CD4-positive, alpha-beta T cell (primary cell): ENCODE measurements at regions of chr9 and their contacts with region 1.

Region 1: DNA sequence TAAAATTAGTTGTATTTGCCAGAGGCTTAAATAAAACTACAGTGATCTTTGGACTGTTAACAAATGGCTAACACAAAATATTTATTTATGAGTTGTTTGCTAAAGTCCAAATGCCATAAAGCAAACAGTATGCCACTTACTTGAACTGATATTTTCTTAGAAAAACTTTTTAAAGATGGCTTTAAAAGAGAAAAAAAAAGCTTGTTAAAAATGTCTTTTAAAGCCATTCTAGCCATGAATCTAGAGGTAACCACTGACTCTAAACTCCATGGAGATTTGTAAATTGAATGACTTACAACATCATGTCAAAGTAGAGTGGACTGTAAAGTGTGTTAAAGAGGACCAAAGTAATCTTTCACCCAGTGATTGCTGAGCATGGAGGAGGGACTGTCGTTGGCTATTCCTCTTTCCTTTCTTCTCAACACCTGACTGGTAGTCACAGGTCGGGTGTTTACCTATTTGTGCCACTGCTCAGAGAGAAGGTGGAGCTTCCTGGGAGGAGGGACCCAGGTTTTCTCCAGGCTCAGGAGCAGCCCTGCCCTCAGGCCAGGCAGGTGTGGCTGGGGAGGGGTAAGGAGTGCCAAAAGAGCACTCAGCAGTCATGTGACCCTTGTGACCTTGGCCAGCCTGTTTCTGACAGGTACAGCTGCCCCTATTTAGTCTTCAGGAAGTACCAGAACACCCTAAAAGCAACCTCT is 69.1 kb upstream of the TJP2 start:
- DNase-seq: no peak
- ATAC-seq: no peak
- H3K4me3 ChIP-seq: no peak overlapping the region
- H3K4me3 Mint-ChIP-seq: no peak overlapping the region
- H3K27ac ChIP-seq: no peak overlapping the region
- H3K27ac Mint-ChIP-seq: no peak overlapping the region
- H3K4me1 ChIP-seq: no peaks in the 10 kb centered on the region
- H3K4me1 Mint-ChIP-seq: no peaks in the 10 kb centered on the region
- H3K27me3 ChIP-seq: no peaks in the 10 kb centered on the region
- H3K27me3 Mint-ChIP-seq: no peaks in the 10 kb centered on the region
- CTCF ChIP-seq: no peak

Region 2: DNA sequence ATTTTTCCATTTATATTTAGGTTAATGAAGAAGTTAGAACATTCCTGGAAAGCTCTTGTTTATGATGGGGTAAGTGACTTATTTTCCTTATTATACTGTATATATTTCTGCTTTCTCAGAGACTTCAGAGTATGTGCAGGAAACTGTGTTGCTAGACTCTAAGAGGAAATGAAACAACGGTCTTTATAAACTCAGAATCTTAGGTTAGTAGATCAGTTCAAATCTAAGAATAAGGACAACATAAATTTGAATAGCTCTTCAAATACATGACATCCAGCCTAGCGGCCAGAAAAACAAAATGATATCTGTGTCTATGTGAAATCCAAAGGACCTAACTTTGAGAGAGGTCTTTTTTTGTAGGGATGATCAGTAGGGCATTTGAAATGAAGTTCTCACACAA is 185.3 kb before region 1 on chr9:
- CTCF ChIA-PET with region 1: no interaction called
- POLR2A ChIA-PET with region 1: no interaction called
- intact Hi-C with region 1: no loop called
- DNase-seq: no peak
- ATAC-seq: no peak
- H3K4me3 ChIP-seq: no peak overlapping the region
- H3K4me3 Mint-ChIP-seq: no peak overlapping the region
- H3K27ac ChIP-seq: no peak overlapping the region
- H3K27ac Mint-ChIP-seq: no peak overlapping the region
- H3K4me1 ChIP-seq: no peaks in the 10 kb centered on the region
- H3K4me1 Mint-ChIP-seq: peaks cover 7% of the 10 kb centered on the region
- H3K27me3 ChIP-seq: no peaks in the 10 kb centered on the region
- H3K27me3 Mint-ChIP-seq: no peaks in the 10 kb centered on the region
- CTCF ChIP-seq: no peak

Region 3: GRCh38 chr9:69143291-69143690 is 38.3 kb after region 1 on chr9:
- CTCF ChIA-PET with region 1: no interaction called
- POLR2A ChIA-PET with region 1: no interaction called
- intact Hi-C with region 1: loop called in 1 of 2 experiments (anchors 5 kb)
- DNase-seq: no peak
- ATAC-seq: no peak
- H3K4me3 ChIP-seq: no peak overlapping the region
- H3K4me3 Mint-ChIP-seq: no peak overlapping the region
- H3K27ac ChIP-seq: no peak overlapping the region
- H3K27ac Mint-ChIP-seq: no peak overlapping the region
- H3K4me1 ChIP-seq: no peaks in the 10 kb centered on the region
- H3K4me1 Mint-ChIP-seq: no peaks in the 10 kb centered on the region
- H3K27me3 ChIP-seq: no peaks in the 10 kb centered on the region
- H3K27me3 Mint-ChIP-seq: no peaks in the 10 kb centered on the region
- CTCF ChIP-seq: no peak

Region 4: DNA sequence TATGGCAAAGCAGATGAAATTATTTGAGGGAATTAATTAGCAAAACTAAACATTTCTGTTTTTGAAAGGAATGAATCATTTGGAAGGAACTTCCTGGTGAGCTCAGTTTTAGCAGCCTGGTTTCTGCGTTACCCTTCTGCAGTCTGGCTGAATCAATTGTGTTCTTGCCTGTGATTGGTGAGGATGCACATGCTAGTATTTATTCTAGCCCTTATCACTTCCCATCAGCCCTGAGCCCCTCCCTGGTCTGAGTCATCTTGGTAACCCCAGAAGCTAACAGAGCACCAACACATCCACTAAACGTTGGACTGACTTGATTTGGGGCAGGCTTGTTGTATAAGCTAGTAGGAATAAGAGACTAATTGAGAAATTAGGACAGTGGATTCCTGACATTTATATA is 75.7 kb after region 1 on chr9:
- CTCF ChIA-PET with region 1: no interaction called
- POLR2A ChIA-PET with region 1: no interaction called
- intact Hi-C with region 1: no loop called
- DNase-seq: peak in 9 of 14 experiments; percentile 18 to 73 (median 48)
- ATAC-seq: peak; percentile 81
- H3K4me3 ChIP-seq: no peak overlapping the region
- H3K4me3 Mint-ChIP-seq: no peak overlapping the region
- H3K27ac ChIP-seq: no peak overlapping the region
- H3K27ac Mint-ChIP-seq: peak overlapping the region; percentile 18
- H3K4me1 ChIP-seq: peaks cover 4% of the 10 kb centered on the region
- H3K4me1 Mint-ChIP-seq: peaks cover 40% of the 10 kb centered on the region
- H3K27me3 ChIP-seq: no peaks in the 10 kb centered on the region
- H3K27me3 Mint-ChIP-seq: peaks cover 5% of the 10 kb centered on the region
- CTCF ChIP-seq: no peak

Region 5: GRCh38 chr9:69199769-69200470 is 94.9 kb after region 1 on chr9:
- CTCF ChIA-PET with region 1: no interaction called
- POLR2A ChIA-PET with region 1: no interaction called
- intact Hi-C with region 1: no loop called
- DNase-seq: peak in 2 of 14 experiments; percentile 14 to 15
- ATAC-seq: no peak
- H3K4me3 ChIP-seq: no peak overlapping the region
- H3K4me3 Mint-ChIP-seq: no peak overlapping the region
- H3K27ac ChIP-seq: no peak overlapping the region
- H3K27ac Mint-ChIP-seq: no peak overlapping the region
- H3K4me1 ChIP-seq: peaks cover 14% of the 10 kb centered on the region
- H3K4me1 Mint-ChIP-seq: peaks cover 11% of the 10 kb centered on the region
- H3K27me3 ChIP-seq: no peaks in the 10 kb centered on the region
- H3K27me3 Mint-ChIP-seq: no peaks in the 10 kb centered on the region
- CTCF ChIP-seq: no peak

Region 6: DNA sequence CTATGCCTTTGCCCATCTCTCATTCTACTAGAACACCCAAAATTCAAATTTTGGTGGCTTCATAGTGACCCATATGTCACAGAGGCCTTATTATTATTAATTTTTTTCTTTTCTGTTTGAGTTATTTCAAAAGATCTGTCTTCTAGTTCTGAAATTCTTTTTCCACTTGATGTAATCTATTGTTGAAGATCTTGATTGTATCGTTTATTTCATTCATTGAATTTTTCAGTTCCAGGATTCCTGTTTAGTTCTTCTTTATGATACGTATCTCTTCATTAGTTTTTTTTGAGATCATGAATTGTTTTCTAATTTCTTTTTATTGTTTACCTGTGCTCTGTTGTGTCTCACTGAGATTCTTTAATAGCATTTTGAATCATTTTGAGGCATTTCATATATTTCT is 591.8 kb after region 1 on chr9:
- CTCF ChIA-PET with region 1: no interaction called
- POLR2A ChIA-PET with region 1: no interaction called
- intact Hi-C with region 1: no loop called
- DNase-seq: no peak
- ATAC-seq: no peak
- H3K4me3 ChIP-seq: no peak overlapping the region
- H3K4me3 Mint-ChIP-seq: no peak overlapping the region
- H3K27ac ChIP-seq: no peak overlapping the region
- H3K27ac Mint-ChIP-seq: no peak overlapping the region
- H3K4me1 ChIP-seq: no peaks in the 10 kb centered on the region
- H3K4me1 Mint-ChIP-seq: no peaks in the 10 kb centered on the region
- H3K27me3 ChIP-seq: peaks cover 0 to 6% of the 10 kb centered on the region in 2 experiments
- H3K27me3 Mint-ChIP-seq: peaks cover 19% of the 10 kb centered on the region
- CTCF ChIP-seq: no peak